Activated T-helper 1 cell treated with anti-CD3 and anti-CD28 coated beads, Interleukin-12 subunit alpha, Interleukin-12 subunit beta, Interleukin-2, Interleukin-4 antibody, amounts not matched to agents 30 ng/mL and 10 ng/mL and 1 ng/mL, durations not matched to agents 14 hours and 24 hours and 36 hours (primary cell): ENCODE measurements at regions of chr7 and their contacts with region 1.

Region 1: DNA sequence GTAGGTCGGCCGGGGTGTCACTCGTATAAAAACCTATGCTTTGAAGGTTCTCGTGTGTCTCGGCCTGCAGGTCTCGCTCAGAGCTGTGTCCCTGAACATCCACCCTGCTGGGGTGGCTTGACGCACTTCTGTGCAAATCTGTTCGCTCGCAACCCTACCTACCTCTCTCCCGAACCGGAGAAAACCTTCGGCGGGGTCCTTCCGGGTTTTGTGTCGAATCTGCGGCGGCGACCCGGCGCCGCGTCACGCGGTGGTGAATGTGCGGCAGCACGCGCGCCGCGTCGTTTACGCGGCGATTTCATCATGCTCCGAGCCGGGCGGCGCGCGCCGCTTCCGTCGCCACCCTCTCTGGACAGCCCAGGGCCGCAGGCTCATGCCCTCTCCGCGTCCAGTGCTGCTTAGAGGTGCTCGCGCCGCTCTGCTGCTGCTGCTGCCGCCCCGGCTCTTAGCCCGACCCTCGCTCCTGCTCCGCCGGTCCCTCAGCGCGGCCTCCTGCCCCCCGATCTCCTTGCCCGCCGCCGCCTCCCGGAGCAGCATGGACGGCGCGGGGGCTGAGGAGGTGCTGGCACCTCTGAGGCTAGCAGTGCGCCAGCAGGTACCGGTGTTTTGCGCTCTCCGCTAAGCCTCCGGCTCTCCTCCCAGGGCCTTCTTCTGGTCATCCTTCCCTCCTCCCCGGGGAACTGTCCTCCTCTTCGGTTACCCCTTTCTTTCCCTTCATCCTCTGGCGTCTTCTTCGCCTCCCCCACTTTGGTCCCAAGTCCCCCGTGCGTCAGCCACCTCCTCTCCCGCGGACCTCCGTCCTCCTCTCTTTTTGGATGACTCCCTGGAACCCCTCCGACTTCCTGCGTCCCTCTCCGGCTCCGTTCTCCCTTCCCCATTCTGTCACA is at the start of gene GARS1:
- DNase-seq: peak; percentile 88
- H3K4me3 Mint-ChIP-seq: peak within 1 kb of the TSS; percentile 99
- H3K27ac Mint-ChIP-seq: peak within 1 kb of the TSS; percentile 99
- H3K4me1 Mint-ChIP-seq: peaks cover 71% of the 10 kb centered on the region
- H3K27me3 Mint-ChIP-seq: no peaks in the 10 kb centered on the region
- total RNA-seq, gene GARS1: 234 and 250 TPM in 2 replicates

Region 2: GRCh38 chr7:30134611-30135545 is 459.9 kb before region 1 on chr7 and contains the start of gene MTURN:
- intact Hi-C with region 1: loop called (anchors 1 kb)
- DNase-seq: peak; percentile 83
- H3K4me3 Mint-ChIP-seq: peak within 1 kb of the TSS; percentile 89
- H3K27ac Mint-ChIP-seq: peak within 1 kb of the TSS; percentile 80
- H3K4me1 Mint-ChIP-seq: peaks cover 6% of the 10 kb centered on the region
- H3K27me3 Mint-ChIP-seq: peaks cover 17% of the 10 kb centered on the region
- total RNA-seq, gene MTURN: 3.9 and 4.3 TPM in 2 replicates

Region 3: DNA sequence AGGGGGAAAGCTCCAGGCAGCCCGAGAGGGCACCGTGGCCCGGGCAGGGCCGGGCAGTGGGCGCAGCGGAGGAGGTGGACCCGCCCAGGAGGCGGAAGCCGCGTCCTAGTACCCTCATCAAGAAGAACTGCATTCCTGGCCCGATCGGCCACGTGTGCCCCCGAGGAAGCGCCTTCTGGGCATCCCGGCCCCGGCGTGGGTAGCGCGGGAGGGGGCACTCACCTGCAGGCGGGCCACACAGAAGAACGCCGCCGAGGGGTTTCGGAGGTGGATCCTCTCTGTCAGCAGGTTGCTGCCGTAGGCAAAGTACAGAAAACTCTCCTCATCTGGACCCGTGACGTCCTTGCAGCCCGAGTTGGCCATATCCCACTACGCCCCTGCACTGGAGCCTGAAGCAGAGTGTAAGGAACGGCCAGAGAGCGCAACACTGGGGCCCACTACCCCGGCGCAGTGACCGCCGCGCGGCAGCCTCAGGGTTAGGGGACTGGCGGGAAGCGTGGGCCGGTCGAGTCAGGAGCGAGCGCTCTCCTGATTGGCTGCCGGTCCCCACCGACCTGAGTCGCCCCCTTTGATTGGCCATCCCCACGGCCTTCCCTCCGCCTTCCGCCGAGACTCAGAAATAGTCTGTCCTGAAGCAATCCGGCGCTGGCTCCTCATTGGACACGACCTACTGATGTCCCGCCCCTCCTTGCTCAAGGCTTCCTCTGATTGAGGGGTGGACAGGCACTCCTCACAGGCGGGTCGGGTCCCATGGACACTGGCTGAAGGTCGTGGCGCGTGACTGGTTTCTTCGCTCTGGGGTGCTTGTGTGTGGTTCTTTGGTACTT is 90.2 kb before region 1 on chr7 and contains the start of gene GGCT:
- intact Hi-C with region 1: loop called (anchors 1 kb)
- DNase-seq: peak; percentile 96
- H3K4me3 Mint-ChIP-seq: peak within 1 kb of the TSS; percentile 87
- H3K27ac Mint-ChIP-seq: peak within 1 kb of the TSS; percentile 89
- H3K4me1 Mint-ChIP-seq: peaks cover 53% of the 10 kb centered on the region
- H3K27me3 Mint-ChIP-seq: no peaks in the 10 kb centered on the region
- total RNA-seq, gene GGCT: 75.4 and 79.0 TPM in 2 replicates

Region 4: GRCh38 chr7:30612658-30613265 is 18.0 kb after region 1 on chr7:
- intact Hi-C with region 1: loop called (anchors 2 kb)
- DNase-seq: no peak
- H3K4me3 Mint-ChIP-seq: peak overlapping the region; percentile 41
- H3K27ac Mint-ChIP-seq: peak overlapping the region; percentile 55
- H3K4me1 Mint-ChIP-seq: peaks cover 35% of the 10 kb centered on the region
- H3K27me3 Mint-ChIP-seq: no peaks in the 10 kb centered on the region

Region 5: GRCh38 chr7:30740424-30741181 is 145.8 kb after region 1 on chr7:
- intact Hi-C with region 1: loop called (anchors 1 kb)
- DNase-seq: peak; percentile 63
- H3K4me3 Mint-ChIP-seq: no peak overlapping the region
- H3K27ac Mint-ChIP-seq: no peak overlapping the region
- H3K4me1 Mint-ChIP-seq: peaks cover 34% of the 10 kb centered on the region
- H3K27me3 Mint-ChIP-seq: peaks cover 4% of the 10 kb centered on the region

Region 6: DNA sequence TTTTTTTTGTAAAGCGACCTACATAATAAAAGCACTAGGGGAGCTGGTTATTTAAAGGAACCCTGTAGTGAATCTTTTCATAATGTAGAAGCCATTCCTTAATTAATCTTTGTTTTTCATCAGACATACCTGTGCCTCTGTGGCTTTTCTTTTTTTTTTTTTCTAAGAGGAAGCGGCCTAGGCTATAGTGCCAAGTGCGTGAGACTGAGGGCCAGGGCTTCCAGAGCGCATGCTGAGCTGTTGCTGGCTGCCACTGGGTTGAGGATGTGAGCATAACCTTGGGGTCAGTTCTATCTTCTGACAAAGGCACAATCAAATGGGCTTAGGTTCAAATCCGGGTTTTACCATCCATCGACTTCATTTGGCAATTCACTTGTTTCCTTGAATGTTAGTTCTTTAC is 642.1 kb after region 1 on chr7:
- intact Hi-C with region 1: no loop called
- DNase-seq: no peak
- H3K4me3 Mint-ChIP-seq: no peak overlapping the region
- H3K27ac Mint-ChIP-seq: no peak overlapping the region
- H3K4me1 Mint-ChIP-seq: no peaks in the 10 kb centered on the region
- H3K27me3 Mint-ChIP-seq: no peaks in the 10 kb centered on the region